ENCODE measurements at regions of chr21 and their contacts with region 1.

Region 1: DNA sequence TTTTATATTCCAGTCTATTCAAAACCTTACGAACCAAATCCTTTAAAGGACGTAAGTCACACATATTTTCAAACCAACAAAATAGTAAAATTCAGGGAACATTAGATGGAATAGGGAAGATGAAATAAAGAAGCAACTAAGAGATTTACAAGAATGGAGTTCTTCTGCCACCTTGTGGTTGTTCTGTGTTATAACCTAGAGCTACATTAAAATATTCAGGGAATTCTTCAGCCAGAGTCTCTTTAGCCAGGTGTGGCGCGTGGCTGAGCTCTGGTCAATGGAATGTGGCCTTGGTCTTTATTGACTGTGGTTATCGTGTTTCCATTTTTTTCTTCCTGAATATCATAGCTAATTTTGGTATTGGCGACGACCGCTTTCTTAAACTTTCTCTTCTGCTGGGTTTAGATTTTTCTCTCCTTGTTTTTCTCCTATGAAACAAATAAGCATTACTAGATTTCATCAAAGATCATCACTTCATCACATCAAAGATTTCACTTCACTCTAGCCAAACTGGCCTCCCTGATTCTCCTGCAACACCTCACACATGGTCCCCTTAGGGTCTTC is 221.3 kb downstream of the MRPL39 start:
- DNase-seq: no peak
- H3K4me3 ChIP-seq: no peak overlapping the region
- H3K27ac ChIP-seq: no peak overlapping the region
- H3K4me1 ChIP-seq: no peaks in the 10 kb centered on the region
- H3K27me3 ChIP-seq: no peaks in the 10 kb centered on the region
- CTCF ChIP-seq: peak; percentile 3 to 79 (median 48)
- EP300 ChIP-seq: no peak
- POLR2A ChIP-seq: no peak

Region 2: DNA sequence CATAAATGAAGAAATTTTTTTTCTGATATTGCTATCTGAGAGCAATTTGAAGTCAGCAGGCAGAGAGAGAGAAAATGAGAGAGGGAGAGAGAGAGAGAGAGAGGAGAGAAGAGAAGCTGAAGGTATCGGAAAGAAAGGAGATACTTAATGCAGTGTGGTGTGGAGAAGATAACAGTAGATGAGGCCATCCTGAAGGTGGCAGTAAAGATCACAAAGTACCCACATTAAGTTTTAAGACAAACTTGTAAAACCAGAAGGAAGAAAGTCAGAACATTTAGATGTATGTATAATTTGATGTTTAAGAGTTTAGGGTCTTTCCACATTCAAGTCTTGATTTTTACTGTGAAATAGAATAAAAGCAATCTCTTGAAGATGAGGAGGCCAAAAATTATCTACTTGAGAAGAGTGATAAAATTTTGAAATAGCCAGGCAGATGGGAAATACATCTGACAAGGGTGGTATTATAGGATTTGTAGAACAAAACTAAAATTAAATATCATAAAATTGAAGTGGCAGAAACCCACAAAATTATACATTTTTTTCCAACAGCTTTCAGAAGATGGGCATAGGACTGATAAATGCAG is 1532.1 kb before region 1 on chr21:
- intact Hi-C with region 1: loop called (anchors 5 kb)
- DNase-seq: no peak
- H3K4me3 ChIP-seq: no peak overlapping the region
- H3K27ac ChIP-seq: no peak overlapping the region
- H3K4me1 ChIP-seq: no peaks in the 10 kb centered on the region
- H3K27me3 ChIP-seq: no peaks in the 10 kb centered on the region
- CTCF ChIP-seq: peak in 2 of 4 experiments; percentile 30 to 43
- EP300 ChIP-seq: no peak
- POLR2A ChIP-seq: no peak

Region 3: DNA sequence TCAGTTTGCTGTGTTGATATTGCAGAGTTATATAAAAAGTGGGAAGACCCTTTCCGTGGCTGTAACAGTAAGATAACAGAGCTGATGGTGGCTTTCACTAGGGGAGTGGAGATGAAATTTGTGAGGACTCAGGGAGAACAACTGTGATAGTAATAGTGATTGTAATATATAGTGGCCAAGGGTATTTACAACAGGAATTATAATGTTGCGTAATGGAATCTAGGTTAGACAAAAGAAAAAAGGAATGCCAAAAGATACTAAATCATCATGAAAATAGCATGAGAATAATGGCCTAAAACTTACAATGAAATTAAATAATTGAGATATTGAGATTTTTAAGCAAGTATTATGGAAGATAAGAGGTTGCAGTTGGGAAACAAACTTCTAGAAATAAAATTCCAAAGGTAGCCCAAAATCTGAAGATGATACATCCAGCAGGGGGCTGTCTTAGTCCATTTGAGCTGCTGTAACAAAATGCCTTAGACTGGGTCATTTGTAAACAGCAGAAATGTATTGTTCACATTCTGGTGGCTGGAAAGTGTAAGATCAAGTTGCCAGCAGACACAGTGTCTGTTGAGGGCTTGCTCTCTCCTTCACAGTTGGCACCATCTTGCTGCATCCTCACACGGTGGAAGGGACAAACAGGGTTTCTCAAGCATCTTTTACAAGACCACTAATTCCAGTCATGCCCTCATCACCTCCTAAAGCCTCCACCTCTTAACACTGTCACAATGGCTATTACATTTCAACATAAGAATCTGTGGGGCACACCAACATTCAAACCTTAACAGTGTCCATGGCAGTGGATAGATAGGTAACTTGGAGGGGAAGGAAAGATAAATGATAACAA is 489.9 kb before region 1 on chr21:
- intact Hi-C with region 1: loop called (anchors 5 kb)
- DNase-seq: no peak
- H3K4me3 ChIP-seq: no peak overlapping the region
- H3K27ac ChIP-seq: no peak overlapping the region
- H3K4me1 ChIP-seq: no peaks in the 10 kb centered on the region
- H3K27me3 ChIP-seq: no peaks in the 10 kb centered on the region
- CTCF ChIP-seq: peak in 3 of 4 experiments; percentile 27 to 46 (median 29)
- EP300 ChIP-seq: no peak
- POLR2A ChIP-seq: no peak